Right cardiac atrium (tissue), 5 donors: ENCODE measurements at regions of chr6 and their contacts with region 1.

Region 1: GRCh38 chr6:72084992-72085569 is 198.7 kb downstream of the RIMS1 start:
- DNase-seq: no peak
- ATAC-seq: no peak
- H3K4me3 ChIP-seq: no peak overlapping the region
- H3K27ac ChIP-seq: no peak overlapping the region
- H3K4me1 ChIP-seq: no peaks in the 10 kb centered on the region
- H3K27me3 ChIP-seq: no peaks in the 10 kb centered on the region

Region 2: GRCh38 chr6:71375676-71376075 is 709.4 kb before region 1 on chr6:
- intact Hi-C with region 1: loop called in 1 of 4 experiments (anchors 10 kb)
- DNase-seq: no peak
- ATAC-seq: no peak
- H3K4me3 ChIP-seq: no peak overlapping the region
- H3K27ac ChIP-seq: no peak overlapping the region
- H3K4me1 ChIP-seq: no peaks in the 10 kb centered on the region
- H3K27me3 ChIP-seq: no peaks in the 10 kb centered on the region

Region 3: DNA sequence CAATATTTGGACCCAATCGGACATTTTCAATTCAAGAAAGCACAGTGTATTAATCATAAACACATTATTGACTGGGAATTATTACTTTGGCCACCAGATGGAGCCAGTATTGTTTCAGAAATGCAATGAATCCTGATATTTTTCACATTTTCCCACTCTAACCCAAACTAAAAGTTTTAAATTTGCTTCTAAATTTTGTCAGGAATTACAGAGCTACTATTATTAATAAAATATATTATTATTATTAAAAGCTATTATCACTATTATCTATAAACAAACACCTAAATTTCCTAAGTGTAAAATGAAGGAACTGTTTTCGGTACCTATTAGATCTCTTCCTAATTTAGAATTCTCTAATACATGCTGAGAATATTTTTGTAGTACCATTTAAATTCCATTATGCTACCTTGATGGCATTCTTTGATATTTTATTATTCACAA is 551.1 kb before region 1 on chr6:
- intact Hi-C with region 1: loop called in 3 of 4 experiments (anchors 10 kb)
- DNase-seq: no peak
- ATAC-seq: no peak
- H3K4me3 ChIP-seq: no peak overlapping the region
- H3K27ac ChIP-seq: no peak overlapping the region
- H3K4me1 ChIP-seq: no peaks in the 10 kb centered on the region
- H3K27me3 ChIP-seq: no peaks in the 10 kb centered on the region

Region 4: DNA sequence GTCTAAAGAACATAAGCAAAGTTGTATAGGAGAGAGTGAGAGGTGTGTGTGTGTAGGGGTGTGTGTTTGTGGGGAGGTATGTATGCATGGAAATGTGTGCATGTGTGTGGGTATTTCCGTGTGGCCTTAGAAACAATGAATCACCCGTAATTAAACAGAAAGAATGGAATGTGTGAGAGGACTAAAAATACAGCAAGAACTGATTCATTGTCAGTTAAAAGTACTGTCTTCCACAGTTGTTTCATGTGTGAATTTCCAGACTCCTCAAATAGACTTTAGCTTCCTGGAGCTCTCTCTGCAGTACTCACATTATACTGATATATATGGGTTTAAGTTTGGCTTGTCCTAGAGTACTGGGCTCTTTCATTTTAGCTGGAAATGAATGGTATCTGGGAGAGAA is 53.0 kb before region 1 on chr6:
- intact Hi-C with region 1: no loop called
- DNase-seq: no peak
- ATAC-seq: no peak
- H3K4me3 ChIP-seq: no peak overlapping the region
- H3K27ac ChIP-seq: no peak overlapping the region
- H3K4me1 ChIP-seq: no peaks in the 10 kb centered on the region
- H3K27me3 ChIP-seq: no peaks in the 10 kb centered on the region

Region 5: DNA sequence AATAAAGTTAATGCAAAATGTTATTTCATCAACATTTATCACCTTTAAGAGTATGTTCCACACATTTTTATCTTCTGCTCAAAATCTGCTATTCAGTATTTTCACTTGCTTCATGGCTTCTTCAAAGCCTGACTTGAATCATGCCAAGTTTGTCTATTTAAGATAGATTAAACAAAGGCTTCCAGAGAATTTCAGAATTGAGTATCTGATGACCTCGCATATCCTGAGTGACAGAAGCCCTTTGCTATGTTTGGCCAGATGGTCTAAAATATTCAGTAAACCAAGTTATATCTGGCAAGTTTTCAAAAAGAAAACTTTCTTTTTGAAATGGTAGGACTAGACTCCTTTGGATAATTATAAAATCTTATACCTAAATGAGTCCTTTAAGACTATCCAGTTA is 187.9 kb after region 1 on chr6:
- intact Hi-C with region 1: no loop called
- DNase-seq: no peak
- ATAC-seq: no peak
- H3K4me3 ChIP-seq: no peak overlapping the region
- H3K27ac ChIP-seq: no peak overlapping the region
- H3K4me1 ChIP-seq: no peaks in the 10 kb centered on the region
- H3K27me3 ChIP-seq: no peaks in the 10 kb centered on the region